Keratinocyte (primary cell): ENCODE measurements at regions of chr3 and their contacts with region 1.

Region 1: GRCh38 chr3:39189959-39190269 is 2.5 kb downstream of the XIRP1 start:
- DNase-seq: no peak
- H3K4me3 ChIP-seq: no peak overlapping the region
- H3K27ac ChIP-seq: no peak overlapping the region
- H3K4me1 ChIP-seq: no peaks in the 10 kb centered on the region
- H3K27me3 ChIP-seq: no peaks in the 10 kb centered on the region
- CTCF ChIP-seq: peak; percentile 82 to 91 (median 84)

Region 2: GRCh38 chr3:39241561-39241960 is 51.6 kb after region 1 on chr3:
- dilution Hi-C with region 1: loop called (anchors 5 kb)
- DNase-seq: no peak
- H3K4me3 ChIP-seq: no peak overlapping the region
- H3K27ac ChIP-seq: no peak overlapping the region
- H3K4me1 ChIP-seq: no peaks in the 10 kb centered on the region
- H3K27me3 ChIP-seq: peaks cover 14% of the 10 kb centered on the region
- CTCF ChIP-seq: no peak

Region 3: DNA sequence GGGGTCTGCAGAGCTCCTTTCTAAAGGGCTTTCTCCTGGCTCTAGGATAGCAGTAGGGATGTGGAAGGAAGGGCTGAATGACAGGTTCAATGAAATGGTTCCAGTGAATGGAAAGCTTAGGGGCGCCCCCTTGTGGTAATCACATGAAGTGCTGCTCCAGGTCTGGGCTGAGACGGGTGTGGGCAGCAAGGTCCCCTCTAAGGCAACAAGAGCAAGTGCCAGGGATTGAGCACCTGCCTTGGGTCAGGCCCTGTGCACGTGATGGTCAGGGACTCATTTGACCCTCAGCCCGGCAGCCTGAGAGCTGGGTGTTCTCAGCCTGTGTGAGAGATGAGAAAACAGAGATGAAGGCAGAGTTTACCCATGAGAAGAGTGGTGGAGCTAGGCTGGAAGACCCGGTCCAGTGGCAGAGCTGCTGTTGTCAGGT is 102.0 kb after region 1 on chr3:
- dilution Hi-C with region 1: loop called (anchors 5 kb)
- DNase-seq: no peak
- H3K4me3 ChIP-seq: no peak overlapping the region
- H3K27ac ChIP-seq: no peak overlapping the region
- H3K4me1 ChIP-seq: no peaks in the 10 kb centered on the region
- H3K27me3 ChIP-seq: no peaks in the 10 kb centered on the region
- CTCF ChIP-seq: peak; percentile 88 to 97 (median 95)